ENCODE measurements at regions of chr2 and their contacts with region 1.

Region 1: GRCh38 chr2:38581193-38582147 is 21.3 kb downstream of the HNRNPLL start:
- DNase-seq: peak; percentile 31
- H3K4me3 Mint-ChIP-seq: no peak overlapping the region
- H3K27ac Mint-ChIP-seq: no peak overlapping the region
- H3K4me1 Mint-ChIP-seq: peaks cover 19% of the 10 kb centered on the region
- H3K27me3 Mint-ChIP-seq: no peaks in the 10 kb centered on the region

Region 2: DNA sequence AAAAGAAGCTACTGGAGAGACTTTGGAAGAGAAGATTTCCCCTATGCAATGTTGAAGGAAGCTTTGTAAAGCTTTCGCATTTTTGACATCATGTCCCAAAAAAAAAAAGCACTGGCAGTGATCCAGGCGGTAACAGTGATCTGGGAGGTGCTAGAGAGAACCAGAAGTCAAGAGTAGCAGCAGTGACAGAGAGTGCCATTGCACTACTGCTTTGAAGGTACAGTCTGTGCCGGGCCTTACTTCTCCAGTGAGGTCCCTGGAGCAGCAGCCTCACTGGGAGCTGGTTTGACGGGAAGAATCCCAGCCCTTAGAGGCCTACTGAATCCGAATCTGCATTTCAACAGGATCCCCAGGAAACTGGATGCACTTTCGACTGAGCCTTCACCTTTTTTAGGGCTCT is 153.5 kb before region 1 on chr2:
- CTCF ChIA-PET with region 1: no interaction called
- intact Hi-C with region 1: no loop called
- DNase-seq: no peak
- H3K4me3 Mint-ChIP-seq: no peak overlapping the region
- H3K27ac Mint-ChIP-seq: no peak overlapping the region
- H3K4me1 Mint-ChIP-seq: no peaks in the 10 kb centered on the region
- H3K27me3 Mint-ChIP-seq: no peaks in the 10 kb centered on the region

Region 3: GRCh38 chr2:38554973-38555595 is 26.4 kb before region 1 on chr2:
- CTCF ChIA-PET with region 1: interaction called, 24 read pairs
- intact Hi-C with region 1: no loop called
- DNase-seq: no peak
- H3K4me3 Mint-ChIP-seq: no peak overlapping the region
- H3K27ac Mint-ChIP-seq: no peak overlapping the region
- H3K4me1 Mint-ChIP-seq: peaks cover 12% of the 10 kb centered on the region
- H3K27me3 Mint-ChIP-seq: no peaks in the 10 kb centered on the region

Region 4: GRCh38 chr2:38596229-38596628 is 14.8 kb after region 1 on chr2:
- CTCF ChIA-PET with region 1: interaction called, 54 read pairs
- intact Hi-C with region 1: no loop called
- DNase-seq: no peak
- H3K4me3 Mint-ChIP-seq: no peak overlapping the region
- H3K27ac Mint-ChIP-seq: peak overlapping the region; percentile 7
- H3K4me1 Mint-ChIP-seq: peaks cover 68% of the 10 kb centered on the region
- H3K27me3 Mint-ChIP-seq: no peaks in the 10 kb centered on the region

Region 5: DNA sequence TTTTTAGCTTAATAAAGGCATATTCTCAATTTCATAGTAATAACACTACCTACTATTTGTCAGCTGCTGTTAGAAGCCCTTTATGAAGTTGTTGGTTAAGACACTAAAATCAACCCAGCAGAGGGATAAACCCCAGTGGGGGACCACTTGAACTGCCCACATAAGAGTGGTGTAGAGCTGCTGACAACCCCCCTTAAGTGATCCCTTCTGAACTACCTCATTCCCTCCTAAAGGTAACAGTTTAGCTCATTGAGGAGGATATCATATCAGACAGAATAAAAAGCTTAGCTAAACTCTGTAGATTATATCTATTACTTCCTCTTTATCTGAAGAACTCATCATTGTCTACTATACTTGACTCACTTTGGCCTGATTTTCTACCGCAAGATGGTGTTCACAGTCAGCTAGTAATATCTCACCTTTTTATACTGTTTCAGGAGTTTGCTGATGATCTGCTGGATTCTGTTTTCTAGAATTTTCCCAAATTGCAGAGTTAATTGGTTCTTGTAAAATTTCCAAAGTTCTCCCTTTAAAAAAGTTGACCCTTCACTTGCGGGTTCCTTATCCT is 100.6 kb after region 1 on chr2:
- CTCF ChIA-PET with region 1: interaction called, 11 read pairs
- intact Hi-C with region 1: no loop called
- DNase-seq: no peak
- H3K4me3 Mint-ChIP-seq: no peak overlapping the region
- H3K27ac Mint-ChIP-seq: peak overlapping the region; percentile 72
- H3K4me1 Mint-ChIP-seq: peaks cover 45% of the 10 kb centered on the region
- H3K27me3 Mint-ChIP-seq: no peaks in the 10 kb centered on the region

Region 6: GRCh38 chr2:38734299-38735058 is 153.0 kb after region 1 on chr2:
- CTCF ChIA-PET with region 1: interaction called, 178 read pairs
- intact Hi-C with region 1: no loop called
- DNase-seq: no peak
- H3K4me3 Mint-ChIP-seq: no peak overlapping the region
- H3K27ac Mint-ChIP-seq: no peak overlapping the region
- H3K4me1 Mint-ChIP-seq: peaks cover 15% of the 10 kb centered on the region
- H3K27me3 Mint-ChIP-seq: no peaks in the 10 kb centered on the region

Region 7: DNA sequence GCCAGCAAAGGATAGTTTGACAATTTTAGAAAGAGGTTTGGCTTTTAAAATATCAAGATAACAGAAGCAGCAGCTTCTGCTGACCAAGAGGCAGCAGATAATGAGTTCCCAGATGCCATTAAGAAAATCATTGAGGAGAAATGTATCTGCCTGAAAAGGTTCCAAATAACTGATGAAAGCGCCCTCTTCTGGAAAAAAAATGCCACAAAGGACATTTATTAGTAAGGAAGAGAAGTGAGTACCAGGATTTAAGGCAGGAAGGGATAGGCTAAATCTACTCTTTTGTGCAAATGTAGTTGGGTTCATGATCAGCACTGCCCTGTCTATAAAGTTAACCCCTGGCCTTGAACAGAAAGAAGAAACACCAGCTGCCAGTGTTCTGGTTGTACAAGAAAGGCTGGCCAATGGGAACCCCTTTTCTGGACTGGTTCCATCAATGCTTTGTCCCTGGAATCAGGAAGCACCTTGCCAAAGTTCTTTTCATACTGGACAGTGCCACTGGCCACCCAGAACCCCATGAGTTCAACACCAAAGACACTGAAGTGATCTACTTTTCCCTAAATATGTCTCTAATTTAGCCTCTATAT is 253.6 kb after region 1 on chr2:
- CTCF ChIA-PET with region 1: interaction called, 3 read pairs
- intact Hi-C with region 1: loop called (anchors 2 kb)
- DNase-seq: no peak
- H3K4me3 Mint-ChIP-seq: no peak overlapping the region
- H3K27ac Mint-ChIP-seq: no peak overlapping the region
- H3K4me1 Mint-ChIP-seq: no peaks in the 10 kb centered on the region
- H3K27me3 Mint-ChIP-seq: no peaks in the 10 kb centered on the region

Measured in activated naive CD4-positive, alpha-beta T cell treated with anti-CD3 and anti-CD28 coated beads for 36 hours (primary cell).